ENCODE measurements at regions of chr12 and their contacts with region 1.

Region 1: GRCh38 chr12:82326905-82327503 is 31.2 kb downstream of the CCDC59 start:
- DNase-seq: peak in 2 of 4 donors; percentile 8 to 21
- ATAC-seq: no peak
- H3K4me3 ChIP-seq: no peak overlapping the region
- H3K27ac ChIP-seq: no peak overlapping the region
- H3K4me1 ChIP-seq: no peaks in the 10 kb centered on the region
- H3K27me3 ChIP-seq: no peaks in the 10 kb centered on the region
- CTCF ChIP-seq: peak in 1 of 2 donors; percentile 50

Region 2: GRCh38 chr12:81644503-81644902 is 682.5 kb before region 1 on chr12:
- intact Hi-C with region 1: loop called in 1 of 2 experiments (anchors 10 kb)
- DNase-seq: peak in 2 of 4 donors; percentile 14 to 52
- ATAC-seq: peak; percentile 75
- H3K4me3 ChIP-seq: no peak overlapping the region
- H3K27ac ChIP-seq: no peak overlapping the region
- H3K4me1 ChIP-seq: no peaks in the 10 kb centered on the region
- H3K27me3 ChIP-seq: no peaks in the 10 kb centered on the region
- CTCF ChIP-seq: peak in 1 of 2 donors; percentile 44

Region 3: DNA sequence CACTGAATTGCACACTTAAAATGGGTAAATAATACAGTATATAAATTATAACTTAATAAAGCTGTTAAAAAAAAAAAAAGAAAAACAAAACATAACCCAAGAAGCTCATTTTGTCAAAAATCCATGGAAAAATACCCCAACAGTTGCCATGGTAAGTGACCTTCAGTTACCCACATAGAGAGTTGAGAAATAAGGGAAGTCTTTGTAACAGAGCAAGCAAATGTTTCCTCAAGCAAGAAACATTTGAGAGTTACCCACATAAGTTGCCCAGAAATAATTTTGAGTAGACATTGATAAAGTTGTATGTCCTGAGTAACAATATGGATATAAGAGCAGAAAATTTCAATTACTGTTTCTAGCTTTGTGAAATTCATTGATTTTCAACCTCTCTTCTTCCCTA is 196.2 kb before region 1 on chr12:
- intact Hi-C with region 1: no loop called
- DNase-seq: no peak
- ATAC-seq: no peak
- H3K4me3 ChIP-seq: no peak overlapping the region
- H3K27ac ChIP-seq: no peak overlapping the region
- H3K4me1 ChIP-seq: no peaks in the 10 kb centered on the region
- H3K27me3 ChIP-seq: no peaks in the 10 kb centered on the region
- CTCF ChIP-seq: no peak

Region 4: GRCh38 chr12:82461851-82462250 is 134.8 kb after region 1 on chr12:
- intact Hi-C with region 1: no loop called
- DNase-seq: no peak
- ATAC-seq: no peak
- H3K4me3 ChIP-seq: no peak overlapping the region
- H3K27ac ChIP-seq: no peak overlapping the region
- H3K4me1 ChIP-seq: no peaks in the 10 kb centered on the region
- H3K27me3 ChIP-seq: no peaks in the 10 kb centered on the region
- CTCF ChIP-seq: no peak

Region 5: GRCh38 chr12:82527165-82527780 is 200.3 kb after region 1 on chr12:
- intact Hi-C with region 1: no loop called
- DNase-seq: peak in 2 of 4 donors; percentile 45 to 81
- ATAC-seq: peak; percentile 73
- H3K4me3 ChIP-seq: no peak overlapping the region
- H3K27ac ChIP-seq: no peak overlapping the region
- H3K4me1 ChIP-seq: no peaks in the 10 kb centered on the region
- H3K27me3 ChIP-seq: no peaks in the 10 kb centered on the region
- CTCF ChIP-seq: peak; percentile 64 to 83

Measured in left lung (tissue), 14 donors.